ENCODE measurements at regions of chr10 and their contacts with region 1.

Region 1: GRCh38 chr10:85204814-85205213 is 876.4 kb downstream of the CCSER2 start:
- DNase-seq: no peak
- ATAC-seq: no peak
- H3K4me3 ChIP-seq: no peak overlapping the region
- H3K27ac ChIP-seq: no peak overlapping the region
- H3K4me1 ChIP-seq: no peaks in the 10 kb centered on the region
- H3K27me3 ChIP-seq: peaks cover 0 to 6% (median 0%) of the 10 kb centered on the region in 7 donors
- CTCF ChIP-seq: no peak

Region 2: GRCh38 chr10:85222300-85222699 is 17.5 kb after region 1 on chr10:
- intact Hi-C with region 1: loop called in 1 of 10 experiments (anchors 2 kb)
- DNase-seq: no peak
- ATAC-seq: no peak
- H3K4me3 ChIP-seq: no peak overlapping the region
- H3K27ac ChIP-seq: no peak overlapping the region
- H3K4me1 ChIP-seq: no peaks in the 10 kb centered on the region
- H3K27me3 ChIP-seq: no peaks in the 10 kb centered on the region
- CTCF ChIP-seq: peak in 4 of 9 donors; percentile 16 to 29 (median 22)

Region 3: DNA sequence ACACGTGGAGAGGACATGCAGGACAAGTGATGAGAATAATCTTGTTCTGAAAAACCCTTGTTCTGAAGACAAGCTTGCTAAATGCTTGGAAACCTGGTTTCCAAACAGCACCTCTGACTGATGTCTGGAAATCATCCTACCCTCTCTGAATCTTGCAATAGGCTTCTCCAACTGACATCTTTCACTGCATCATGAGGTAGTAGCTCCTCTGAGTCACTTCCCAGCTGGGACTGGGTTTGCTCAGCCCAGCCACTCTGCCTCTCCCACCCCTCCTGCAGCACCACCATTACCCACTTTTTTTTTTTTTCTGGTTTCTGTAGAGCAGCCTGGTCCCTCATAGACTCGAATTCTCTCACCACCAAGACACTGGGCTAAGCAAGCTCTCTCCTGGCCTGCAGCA is 242.0 kb after region 1 on chr10:
- intact Hi-C with region 1: no loop called
- DNase-seq: no peak
- ATAC-seq: no peak
- H3K4me3 ChIP-seq: no peak overlapping the region
- H3K27ac ChIP-seq: no peak overlapping the region
- H3K4me1 ChIP-seq: no peaks in the 10 kb centered on the region
- H3K27me3 ChIP-seq: no peaks in the 10 kb centered on the region
- CTCF ChIP-seq: no peak

Measured in heart right ventricle (tissue), 16 donors.